ENCODE measurements at regions of chr5 and their contacts with region 1.

Region 1: DNA sequence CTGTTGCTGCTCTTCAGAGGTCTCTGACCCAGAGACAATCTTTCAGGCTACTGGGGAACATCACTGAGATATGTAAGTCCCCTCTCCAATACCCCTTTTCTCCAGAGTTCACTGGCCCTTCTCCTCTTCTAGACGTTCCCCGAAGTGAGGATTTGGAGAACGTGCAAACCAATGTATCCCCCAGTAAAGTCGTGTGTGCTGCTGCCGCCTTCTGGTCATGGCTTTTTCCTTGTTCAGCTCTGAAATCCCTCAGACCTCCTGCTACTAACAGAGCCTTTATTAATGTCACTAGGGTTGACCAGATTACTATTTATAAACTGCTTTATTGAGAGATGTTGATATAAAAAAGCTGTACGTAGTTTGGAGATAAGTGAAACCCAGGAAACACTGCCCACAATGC is 1028.6 kb downstream of the CDH9 start:
- DNase-seq: no peak
- H3K4me3 ChIP-seq: no peak overlapping the region
- H3K27ac ChIP-seq: no peak overlapping the region
- H3K4me1 ChIP-seq: no peaks in the 10 kb centered on the region
- H3K27me3 ChIP-seq: no peaks in the 10 kb centered on the region
- CTCF ChIP-seq: no peak
- POLR2A ChIP-seq: no peak

Region 2: DNA sequence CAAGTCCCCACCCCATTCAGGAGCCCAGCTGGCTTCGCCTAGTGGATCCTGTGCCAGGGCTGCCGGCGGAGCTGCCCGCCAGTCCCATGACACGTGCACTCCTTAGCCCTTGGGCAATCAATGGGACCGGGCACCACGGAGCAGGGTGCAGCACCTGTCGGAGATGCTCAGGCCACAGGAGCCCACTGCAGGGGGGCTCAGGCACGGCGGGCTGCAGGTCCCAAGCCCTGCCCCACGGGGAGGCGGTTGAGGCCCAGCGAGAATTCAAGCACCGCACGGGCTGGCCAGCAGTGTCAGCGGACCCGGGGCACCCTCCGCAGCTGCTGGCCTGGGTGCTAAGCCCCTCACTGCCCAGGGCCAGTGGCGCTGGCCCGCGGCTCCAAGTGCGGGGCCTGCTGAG is 395.3 kb before region 1 on chr5:
- intact Hi-C with region 1: loop called (anchors 5 kb)
- DNase-seq: no peak
- H3K4me3 ChIP-seq: no peak overlapping the region
- H3K27ac ChIP-seq: no peak overlapping the region
- H3K4me1 ChIP-seq: no peaks in the 10 kb centered on the region
- H3K27me3 ChIP-seq: no peaks in the 10 kb centered on the region
- CTCF ChIP-seq: no peak
- POLR2A ChIP-seq: no peak

Region 3: GRCh38 chr5:25991639-25992038 is 18.1 kb before region 1 on chr5:
- intact Hi-C with region 1: no loop called
- DNase-seq: no peak
- H3K4me3 ChIP-seq: no peak overlapping the region
- H3K27ac ChIP-seq: no peak overlapping the region
- H3K4me1 ChIP-seq: no peaks in the 10 kb centered on the region
- H3K27me3 ChIP-seq: no peaks in the 10 kb centered on the region
- CTCF ChIP-seq: no peak
- POLR2A ChIP-seq: no peak